ENCODE measurements at regions of chr6 and their contacts with region 1.

Region 1: DNA sequence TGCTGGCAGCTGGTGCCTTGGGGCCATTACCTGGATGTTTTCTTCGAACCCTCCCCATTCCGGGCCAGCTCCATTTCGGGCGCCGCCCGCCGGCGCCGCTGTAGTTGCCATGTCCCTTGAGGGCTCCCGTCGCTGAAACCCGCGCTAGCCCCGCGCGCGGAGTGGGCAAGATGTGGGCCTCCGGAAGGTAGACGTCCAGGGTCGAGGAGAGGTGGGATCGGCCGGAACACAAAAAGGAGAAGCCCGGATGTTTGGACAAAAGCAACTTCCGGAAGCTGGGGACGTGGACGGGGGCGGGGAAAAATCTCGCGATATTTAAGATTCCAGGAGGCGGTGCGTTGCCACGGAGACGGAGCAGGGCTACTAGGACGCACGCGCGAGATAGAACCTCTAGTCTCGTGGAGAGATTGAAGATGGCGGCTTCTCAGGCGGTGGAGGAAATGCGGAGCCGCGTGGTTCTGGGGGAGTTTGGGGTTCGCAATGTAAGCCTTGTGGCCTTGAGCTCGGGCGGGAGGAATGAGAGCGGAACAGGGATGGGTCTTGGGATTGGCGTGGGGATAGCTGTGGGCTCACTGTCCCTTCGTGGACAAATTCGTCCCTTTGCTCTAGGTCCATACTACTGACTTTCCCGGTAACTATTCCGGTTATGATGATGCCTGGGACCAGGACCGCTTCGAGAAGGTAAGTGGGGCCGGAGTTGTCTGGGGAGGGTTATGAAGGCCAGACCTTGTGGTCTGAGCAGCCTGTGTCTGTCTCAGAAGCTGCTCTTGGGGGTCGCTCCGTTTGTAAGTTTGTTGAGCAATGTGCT is at the starts of genes POLR1C and YIPF3:
- DNase-seq: peak; percentile 98
- H3K4me3 Mint-ChIP-seq: no peak within 1 kb of the TSS
- H3K27ac Mint-ChIP-seq: no peak within 1 kb of the TSS
- H3K4me1 Mint-ChIP-seq: peaks cover 27% of the 10 kb centered on the region
- H3K27me3 Mint-ChIP-seq: no peaks in the 10 kb centered on the region
- total RNA-seq, gene POLR1C: 23.1 to 33.4 TPM
- total RNA-seq, gene YIPF3: 68.1 to 71.7 TPM

Region 2: GRCh38 chr6:43547222-43547621 is 30.3 kb after region 1 on chr6:
- CTCF ChIA-PET with region 1: interaction called, 10 read pairs
- POLR2A ChIA-PET with region 1: no interaction called
- DNase-seq: no peak
- H3K4me3 Mint-ChIP-seq: no peak overlapping the region
- H3K27ac Mint-ChIP-seq: peak overlapping the region; percentile 14
- H3K4me1 Mint-ChIP-seq: no peaks in the 10 kb centered on the region
- H3K27me3 Mint-ChIP-seq: no peaks in the 10 kb centered on the region

Region 3: DNA sequence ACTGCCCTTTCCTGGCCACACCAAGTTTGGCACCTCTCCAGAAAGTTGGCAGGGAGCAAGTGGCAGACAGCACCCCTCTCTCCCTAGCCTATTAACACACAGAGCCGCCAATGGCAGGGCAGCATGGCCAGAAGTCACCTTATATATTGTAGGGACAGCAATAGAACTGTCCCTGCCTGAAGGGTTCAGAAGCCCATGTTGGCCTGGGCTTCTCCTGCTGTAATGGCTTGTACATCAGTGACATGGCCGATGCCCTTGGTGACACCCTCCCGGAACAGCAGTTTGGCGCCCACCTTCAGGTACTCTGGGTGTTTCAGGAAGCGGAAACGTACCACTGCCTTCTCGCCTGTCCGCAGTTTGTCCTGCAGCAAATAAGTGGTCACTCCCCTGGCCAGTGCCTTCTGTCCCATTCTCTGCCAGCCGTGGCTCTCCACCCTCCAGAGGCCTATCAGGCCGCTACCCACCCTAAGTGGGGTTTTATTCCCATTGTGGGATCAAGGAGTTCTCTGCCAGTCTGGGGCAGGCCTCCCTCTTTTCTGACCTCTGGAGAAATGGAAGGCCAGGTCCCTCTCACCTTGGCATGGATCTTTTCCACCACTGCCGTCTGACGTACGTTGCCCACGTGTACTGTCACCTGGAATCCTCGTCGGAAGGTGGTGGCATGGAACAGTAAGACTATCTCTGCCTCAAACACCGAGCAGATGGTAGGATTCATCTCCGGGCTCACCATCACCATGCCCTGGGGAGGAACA is 104.7 kb after region 1 on chr6:
- CTCF ChIA-PET with region 1: no interaction called
- POLR2A ChIA-PET with region 1: interaction called, 11 read pairs
- DNase-seq: no peak
- H3K4me3 Mint-ChIP-seq: no peak overlapping the region
- H3K27ac Mint-ChIP-seq: peak overlapping the region; percentile 50
- H3K4me1 Mint-ChIP-seq: peaks cover 7% of the 10 kb centered on the region
- H3K27me3 Mint-ChIP-seq: no peaks in the 10 kb centered on the region